Breast epithelium (tissue), 4 donors: ENCODE measurements at regions of chr9 and their contacts with region 1.

Region 1: GRCh38 chr9:117245175-117245829 is 169.6 kb downstream of the ASTN2 start:
- DNase-seq: no peak
- H3K4me3 ChIP-seq: no peak overlapping the region
- H3K27ac ChIP-seq: no peak overlapping the region
- H3K4me1 ChIP-seq: no peaks in the 10 kb centered on the region
- H3K27me3 ChIP-seq: no peaks in the 10 kb centered on the region
- CTCF ChIP-seq: no peak
- POLR2A ChIP-seq: no peak

Region 2: GRCh38 chr9:117184173-117184572 is 61.1 kb before region 1 on chr9:
- intact Hi-C with region 1: loop called (anchors 2 kb)
- DNase-seq: no peak
- H3K4me3 ChIP-seq: no peak overlapping the region
- H3K27ac ChIP-seq: no peak overlapping the region
- H3K4me1 ChIP-seq: no peaks in the 10 kb centered on the region
- H3K27me3 ChIP-seq: no peaks in the 10 kb centered on the region
- CTCF ChIP-seq: no peak
- POLR2A ChIP-seq: no peak

Region 3: GRCh38 chr9:117354244-117354847 is 109.0 kb after region 1 on chr9:
- intact Hi-C with region 1: no loop called
- DNase-seq: no peak
- H3K4me3 ChIP-seq: no peak overlapping the region
- H3K27ac ChIP-seq: no peak overlapping the region
- H3K4me1 ChIP-seq: no peaks in the 10 kb centered on the region
- H3K27me3 ChIP-seq: no peaks in the 10 kb centered on the region
- CTCF ChIP-seq: no peak
- POLR2A ChIP-seq: no peak